Upper lobe of right lung (tissue), 1 donor: ENCODE measurements at regions of chr10 and their contacts with region 1.

Region 1: DNA sequence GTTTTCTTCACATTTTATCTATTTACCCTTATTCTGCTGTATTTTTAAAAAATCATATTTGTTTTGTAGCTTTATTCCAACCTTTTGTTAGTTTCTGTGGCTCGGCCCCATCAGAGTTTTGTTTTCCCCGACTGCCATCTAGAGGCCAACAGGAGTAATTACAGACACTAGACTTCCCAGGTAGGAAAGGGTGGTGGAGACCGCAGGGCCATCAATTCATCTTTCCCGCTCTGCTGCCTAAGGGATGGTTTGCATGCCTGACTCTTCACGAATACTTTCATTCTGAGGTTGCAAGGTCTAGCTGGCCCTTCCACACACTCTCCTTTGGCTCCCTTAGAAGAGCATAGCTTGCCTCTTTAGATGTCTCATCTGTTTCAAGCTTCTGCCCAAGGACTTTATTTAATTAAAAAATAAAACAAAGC is 38.3 kb downstream of the LYZL2 start:
- DNase-seq: no peak
- ATAC-seq: peak; percentile 81
- H3K4me3 ChIP-seq: no peak overlapping the region
- H3K27ac ChIP-seq: no peak overlapping the region
- H3K4me1 ChIP-seq: peaks cover 10% of the 10 kb centered on the region
- H3K27me3 ChIP-seq: no peaks in the 10 kb centered on the region
- CTCF ChIP-seq: peak; percentile 85

Region 2: DNA sequence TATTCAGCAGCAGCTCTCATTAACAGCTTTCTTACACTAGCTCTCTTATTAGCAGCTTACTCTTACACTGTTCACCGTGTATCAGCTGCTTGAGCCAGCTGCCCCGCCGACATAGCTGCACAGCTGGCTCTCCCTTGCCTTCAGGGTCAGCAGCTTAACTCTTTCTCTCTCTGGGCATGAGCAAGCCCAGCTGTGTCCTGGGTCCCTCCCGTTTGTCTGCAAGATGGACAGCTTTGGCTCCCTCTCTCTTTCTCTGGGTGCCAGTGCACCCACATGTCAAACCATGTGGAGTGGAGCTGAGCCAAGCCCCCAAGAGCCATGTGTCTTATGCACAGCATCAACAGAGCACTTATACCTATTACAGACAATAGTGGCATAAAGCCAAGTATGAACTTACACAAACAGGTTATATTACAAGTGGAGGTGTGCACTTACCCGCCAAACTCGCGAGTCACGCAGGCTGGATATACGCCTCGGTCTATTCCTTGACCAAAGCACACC is 206.5 kb before region 1 on chr10:
- intact Hi-C with region 1: loop called (anchors 5 kb)
- DNase-seq: peak; percentile 54
- ATAC-seq: peak; percentile 76
- H3K4me3 ChIP-seq: no peak overlapping the region
- H3K27ac ChIP-seq: no peak overlapping the region
- H3K4me1 ChIP-seq: peaks cover 9% of the 10 kb centered on the region
- H3K27me3 ChIP-seq: no peaks in the 10 kb centered on the region
- CTCF ChIP-seq: peak; percentile 50

Region 3: DNA sequence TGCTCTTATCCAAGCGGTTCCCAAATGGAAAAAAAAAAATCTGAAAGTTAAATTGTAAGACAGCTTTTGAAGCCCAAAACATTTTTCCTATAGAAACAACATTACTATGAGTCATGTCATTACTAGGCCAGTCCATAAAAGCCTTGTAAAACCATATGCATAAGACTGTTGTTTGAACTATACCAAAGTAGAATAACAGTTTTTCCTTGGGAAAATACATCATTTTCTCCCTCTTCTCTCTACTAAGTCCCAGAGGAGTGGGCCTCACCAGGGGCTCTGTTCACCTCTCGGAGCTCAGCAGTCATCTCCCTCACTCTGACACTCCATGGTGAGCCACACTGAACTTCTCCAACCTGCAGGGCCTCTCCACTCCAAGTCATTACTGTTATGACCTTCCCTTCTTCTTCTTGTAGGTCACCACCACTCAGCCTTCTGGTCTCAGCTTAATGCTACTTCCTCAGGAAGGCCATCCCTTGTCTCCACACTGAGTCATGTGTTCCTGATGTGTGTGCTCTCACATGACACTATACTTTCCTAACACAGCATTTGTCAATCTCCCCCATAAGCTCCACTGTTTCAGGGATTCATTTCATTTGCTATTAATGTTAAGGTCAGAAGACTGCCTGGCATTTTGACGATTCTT is 407.9 kb after region 1 on chr10:
- intact Hi-C with region 1: no loop called
- DNase-seq: no peak
- ATAC-seq: peak; percentile 94
- H3K4me3 ChIP-seq: peak overlapping the region; percentile 34
- H3K27ac ChIP-seq: peak overlapping the region; percentile 67
- H3K4me1 ChIP-seq: peaks cover 10% of the 10 kb centered on the region
- H3K27me3 ChIP-seq: no peaks in the 10 kb centered on the region
- CTCF ChIP-seq: no peak